HEK293 (cell line): ENCODE measurements at regions of chr7 and their contacts with region 1.

Region 1: DNA sequence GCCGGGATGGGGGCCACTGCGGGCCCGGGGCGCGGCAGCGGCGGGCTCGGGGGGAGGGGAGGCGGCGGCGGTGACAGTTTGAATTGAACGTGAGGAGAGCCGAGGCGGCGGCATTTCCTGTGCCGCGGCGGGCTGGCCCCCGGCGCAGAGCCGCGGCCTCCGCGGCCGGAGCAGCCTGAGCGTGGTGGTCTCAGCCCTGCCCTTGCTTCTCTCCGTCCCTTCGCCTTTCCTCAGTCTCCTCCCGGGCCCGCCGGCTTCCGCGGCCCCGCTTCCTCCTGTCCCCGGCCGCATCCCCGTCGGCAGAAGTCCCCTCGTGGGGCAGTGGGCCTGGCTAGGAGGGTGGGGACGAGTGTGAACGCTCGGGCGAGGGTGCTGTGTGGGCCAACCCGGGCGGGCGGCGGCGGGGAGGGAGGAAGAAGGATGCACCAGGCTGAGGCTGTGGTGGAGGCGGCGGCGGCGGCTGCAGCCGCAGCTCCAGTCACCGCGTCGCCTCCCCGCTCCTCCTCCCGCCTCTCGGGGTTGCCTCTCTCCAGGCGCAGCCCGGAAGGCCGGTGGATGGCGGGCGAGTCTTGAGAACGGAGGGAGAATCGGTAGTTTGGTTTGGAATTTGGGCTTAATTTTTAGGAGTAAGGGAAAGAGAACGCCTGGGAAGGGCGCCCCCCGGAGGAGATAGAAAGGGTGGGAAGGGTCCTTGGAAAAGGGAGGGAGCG is 690 bp downstream of the SEPTIN7 start:
- H3K4me3 ChIP-seq: peak overlapping the region; percentile 89
- H3K27ac ChIP-seq: peak overlapping the region; percentile 92
- H3K4me1 ChIP-seq: peaks cover 8% of the 10 kb centered on the region; the same call in 1 of the 2 replicates
- CTCF ChIP-seq: peak; percentile 84

Region 2: DNA sequence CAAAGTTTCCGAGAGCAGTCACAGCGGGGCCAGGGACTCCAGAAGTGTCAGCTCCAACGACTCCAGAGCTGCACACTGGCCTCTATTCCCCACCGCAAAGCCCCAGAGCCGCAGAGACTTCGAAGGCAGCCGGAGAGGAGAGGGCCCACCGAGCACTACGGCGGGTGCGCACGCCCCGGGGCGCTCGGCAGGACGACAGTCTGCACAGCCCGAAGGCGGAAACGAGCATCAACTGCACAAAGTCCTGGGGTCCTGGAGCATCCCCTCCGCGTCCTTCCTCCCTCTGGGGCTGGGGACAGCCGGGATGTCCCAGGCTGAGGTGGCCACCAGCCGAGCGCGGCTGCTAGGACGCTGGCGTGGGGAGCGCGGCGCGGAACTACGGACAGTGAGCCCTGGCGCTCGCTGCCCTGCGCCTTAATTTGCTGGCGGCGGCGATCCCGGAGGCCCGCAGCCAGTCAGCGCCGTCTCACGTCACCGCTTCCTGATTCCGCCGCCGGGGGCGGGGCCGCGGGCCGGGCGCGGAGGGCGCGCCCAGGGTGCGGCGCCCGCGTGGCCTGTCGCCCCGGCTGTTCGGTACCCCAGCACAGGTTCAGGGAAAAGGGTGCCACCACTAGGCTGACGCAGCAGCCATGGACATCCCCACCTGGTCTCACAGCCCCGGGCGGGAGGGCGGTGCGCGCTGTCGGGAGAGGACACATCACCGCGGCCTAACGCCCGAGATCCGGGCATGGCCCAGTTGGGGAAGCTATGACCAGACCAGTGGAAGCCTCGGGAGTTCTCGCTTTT is 547.6 kb before region 1 on chr7 and contains the start of gene TBX20:
- CTCF ChIA-PET with region 1: no interaction called
- POLR2A ChIA-PET with region 1: no interaction called
- H3K4me3 ChIP-seq: peak within 1 kb of the TSS; percentile 89
- H3K27ac ChIP-seq: peak within 1 kb of the TSS; percentile 61
- H3K4me1 ChIP-seq: peaks cover 15% of the 10 kb centered on the region
- CTCF ChIP-seq: no peak

Region 3: GRCh38 chr7:35498416-35498815 is 303.1 kb before region 1 on chr7:
- CTCF ChIA-PET with region 1: no interaction called
- POLR2A ChIA-PET with region 1: no interaction called
- H3K4me3 ChIP-seq: no peak overlapping the region
- H3K27ac ChIP-seq: no peak overlapping the region
- H3K4me1 ChIP-seq: no peaks in the 10 kb centered on the region
- CTCF ChIP-seq: no peak

Region 4: DNA sequence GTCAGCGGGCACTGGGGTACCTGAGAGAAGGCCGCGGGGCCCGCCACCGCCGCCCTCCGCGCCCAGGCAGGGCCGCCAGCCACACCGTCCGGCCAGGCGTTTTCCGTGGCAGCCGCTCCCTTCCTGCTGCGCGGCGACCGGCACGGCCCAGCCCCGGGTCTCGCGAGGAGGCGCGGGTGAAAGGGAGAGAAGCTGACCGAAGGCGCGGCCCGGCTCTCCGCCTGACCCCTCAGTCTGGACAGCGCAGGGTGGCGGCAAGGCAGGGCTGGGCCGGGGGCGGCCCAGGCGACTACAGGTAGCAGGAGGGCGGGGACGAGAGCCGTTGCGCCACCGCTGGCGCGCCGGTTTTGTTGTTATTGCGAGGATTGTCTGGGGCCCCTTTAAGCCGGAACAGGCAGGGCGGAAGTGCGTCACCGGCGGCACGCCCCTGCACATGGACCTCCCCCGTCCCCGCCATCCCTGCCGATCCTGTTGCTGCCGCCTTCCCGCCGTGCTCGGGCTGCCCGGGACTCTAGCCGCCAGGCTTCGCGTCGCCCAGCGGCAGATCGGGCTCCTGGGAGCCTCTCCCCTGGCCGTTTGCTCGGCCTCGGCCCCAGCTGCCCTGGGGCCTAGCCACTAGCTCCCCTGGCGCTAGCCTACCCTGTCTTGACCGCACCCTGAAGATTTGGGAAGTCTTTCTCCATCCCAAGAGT is 106.6 kb before region 1 on chr7 and contains the start of gene HERPUD2:
- CTCF ChIA-PET with region 1: interaction called, 5 read pairs
- POLR2A ChIA-PET with region 1: interaction called, 18 read pairs
- H3K4me3 ChIP-seq: peak within 1 kb of the TSS; percentile 90
- H3K27ac ChIP-seq: peak within 1 kb of the TSS; percentile 78
- H3K4me1 ChIP-seq: no peaks in the 10 kb centered on the region
- CTCF ChIP-seq: peak; percentile 69

Region 5: DNA sequence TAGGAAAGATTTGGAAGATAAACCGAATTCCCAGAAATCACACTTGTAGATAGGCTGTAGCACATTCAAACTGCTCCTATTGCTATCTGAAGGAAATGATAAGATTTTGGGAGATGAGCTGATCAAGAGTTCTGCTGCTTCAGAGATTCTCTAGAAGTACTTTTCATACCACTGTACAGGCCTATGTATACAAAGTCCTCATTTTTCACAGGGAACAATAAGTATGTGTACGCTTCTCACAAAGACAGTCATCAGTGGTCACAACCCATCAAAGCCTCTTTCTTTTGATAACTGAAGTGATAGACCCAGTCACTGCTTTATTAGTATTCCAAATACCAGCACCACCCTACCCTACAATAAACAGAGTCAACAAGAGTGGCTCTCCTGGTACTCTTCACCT is 16.3 kb before region 1 on chr7:
- CTCF ChIA-PET with region 1: interaction called, 5 read pairs
- POLR2A ChIA-PET with region 1: interaction called, 11 read pairs
- H3K4me3 ChIP-seq: no peak overlapping the region
- H3K27ac ChIP-seq: no peak overlapping the region
- H3K4me1 ChIP-seq: no peaks in the 10 kb centered on the region
- CTCF ChIP-seq: no peak

Region 6: DNA sequence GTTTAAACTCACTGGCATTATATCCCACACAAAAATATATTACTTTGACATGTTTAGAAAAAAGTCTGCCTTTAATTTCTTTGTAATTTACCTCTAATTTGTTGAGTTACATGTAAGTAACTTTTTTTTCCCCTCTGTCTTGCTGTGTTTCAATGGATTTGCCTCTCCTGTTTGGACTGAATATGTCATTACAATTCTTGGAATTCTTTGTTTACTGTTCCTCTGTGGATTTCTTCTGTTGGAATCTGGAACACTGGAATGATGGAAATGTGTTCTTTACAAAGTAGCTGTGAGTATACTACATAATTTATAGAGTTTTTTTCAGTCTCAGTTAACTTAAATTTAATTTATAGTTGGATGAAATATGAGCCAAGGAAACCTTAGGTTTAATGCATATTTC is 29.7 kb after region 1 on chr7:
- CTCF ChIA-PET with region 1: interaction called, 3 read pairs
- POLR2A ChIA-PET with region 1: interaction called, 11 read pairs
- H3K4me3 ChIP-seq: no peak overlapping the region
- H3K27ac ChIP-seq: no peak overlapping the region
- H3K4me1 ChIP-seq: no peaks in the 10 kb centered on the region
- CTCF ChIP-seq: no peak

Region 7: DNA sequence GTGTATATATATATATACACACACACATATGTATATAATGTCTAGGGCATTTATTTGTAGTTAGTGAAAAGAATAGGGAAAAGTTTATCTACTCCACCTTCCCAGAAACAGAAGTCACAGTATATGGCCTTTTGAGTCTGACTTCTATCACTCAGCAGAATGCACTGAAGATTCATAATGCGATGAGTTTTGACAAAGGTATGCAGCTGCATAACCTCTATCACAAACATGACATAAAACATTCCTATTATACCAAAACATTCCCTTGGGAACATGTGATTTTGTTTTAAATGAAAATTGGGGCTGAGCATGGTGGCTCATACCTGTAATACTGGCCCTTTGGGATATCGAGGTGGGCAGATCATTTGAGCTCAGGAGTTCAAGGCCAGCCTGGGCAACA is 214.2 kb after region 1 on chr7:
- CTCF ChIA-PET with region 1: no interaction called
- POLR2A ChIA-PET with region 1: no interaction called
- H3K4me3 ChIP-seq: no peak overlapping the region
- H3K27ac ChIP-seq: no peak overlapping the region
- H3K4me1 ChIP-seq: no peaks in the 10 kb centered on the region
- CTCF ChIP-seq: no peak